ENCODE measurements at regions of chr15 and their contacts with region 1.

Region 1: GRCh38 chr15:101242160-101242998 is 9.5 kb downstream of the CHSY1 start:
- DNase-seq: peak; percentile 78 to 88 (median 80)
- H3K4me3 ChIP-seq: peak overlapping the region in 1 of 2 donors; percentile 57
- H3K4me3 Mint-ChIP-seq: peak overlapping the region; percentile 64 to 89 (median 80)
- H3K27ac ChIP-seq: peak overlapping the region; percentile 49
- H3K27ac Mint-ChIP-seq: peak overlapping the region; percentile 82 to 97 (median 89)
- H3K4me1 ChIP-seq: peaks cover 87% of the 10 kb centered on the region
- H3K4me1 Mint-ChIP-seq: peaks cover 67 to 96% (median 78%) of the 10 kb centered on the region in 4 donors
- H3K27me3 ChIP-seq: no peaks in the 10 kb centered on the region
- H3K27me3 Mint-ChIP-seq: no peaks in the 10 kb centered on the region

Region 2: DNA sequence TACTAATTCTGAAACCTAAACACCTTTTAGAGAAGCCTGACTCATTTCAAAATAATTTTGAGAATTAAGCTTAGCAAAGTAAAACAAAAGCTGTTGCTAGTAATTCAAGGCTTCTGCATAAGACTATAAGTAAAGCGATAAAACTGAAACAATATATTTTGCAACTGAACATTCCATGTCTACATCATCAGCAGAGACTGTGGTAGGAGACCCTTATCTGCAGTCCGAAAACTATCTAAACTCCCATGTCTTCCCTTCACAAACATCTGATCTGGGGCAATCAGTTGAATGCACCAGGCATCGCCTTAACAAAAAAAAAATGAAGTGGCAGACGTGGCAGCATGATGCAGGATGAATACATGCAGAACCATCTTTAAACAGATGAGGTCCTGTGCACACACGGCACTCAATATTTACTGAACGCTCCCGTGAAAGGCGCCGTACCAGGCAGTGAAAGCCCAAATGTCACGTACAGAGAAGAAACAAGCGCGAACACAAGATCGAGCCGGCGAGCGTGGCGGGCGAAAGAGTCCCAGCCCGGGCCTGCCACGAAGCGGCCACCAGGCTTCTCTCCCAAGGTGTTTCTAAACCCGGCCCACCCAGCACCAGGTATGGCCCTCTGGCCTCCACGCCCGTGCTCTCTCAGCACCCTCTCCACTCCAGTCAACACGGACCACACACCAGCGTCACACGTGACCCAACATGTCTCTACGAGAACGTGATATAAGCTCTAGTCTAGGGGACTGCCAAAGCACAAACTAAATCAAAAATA is 53.6 kb before region 1 on chr15:
- CTCF ChIA-PET with region 1: no interaction called
- POLR2A ChIA-PET with region 1: no interaction called
- intact Hi-C with region 1: no loop called
- DNase-seq: no peak
- H3K4me3 ChIP-seq: no peak overlapping the region
- H3K4me3 Mint-ChIP-seq: peak overlapping the region in 5 of 8 donors; percentile 2 to 46 (median 40)
- H3K27ac ChIP-seq: no peak overlapping the region
- H3K27ac Mint-ChIP-seq: peak overlapping the region in 5 of 7 donors; percentile 7 to 63 (median 36)
- H3K4me1 ChIP-seq: peaks cover 34% of the 10 kb centered on the region
- H3K4me1 Mint-ChIP-seq: peaks cover 38 to 61% (median 47%) of the 10 kb centered on the region in 4 donors
- H3K27me3 ChIP-seq: no peaks in the 10 kb centered on the region
- H3K27me3 Mint-ChIP-seq: no peaks in the 10 kb centered on the region

Region 3: GRCh38 chr15:101206176-101206591 is 36.2 kb before region 1 on chr15:
- CTCF ChIA-PET with region 1: interaction called, 6 read pairs
- POLR2A ChIA-PET with region 1: no interaction called
- intact Hi-C with region 1: loop called (anchors 5 kb)
- DNase-seq: peak; percentile 28 to 88 (median 40)
- H3K4me3 ChIP-seq: peak overlapping the region; percentile 19 to 38
- H3K4me3 Mint-ChIP-seq: peak overlapping the region; percentile 79 to 86 (median 84)
- H3K27ac ChIP-seq: no peak overlapping the region
- H3K27ac Mint-ChIP-seq: peak overlapping the region; percentile 73 to 90 (median 80)
- H3K4me1 ChIP-seq: peaks cover 38% of the 10 kb centered on the region
- H3K4me1 Mint-ChIP-seq: peaks cover 40 to 75% (median 64%) of the 10 kb centered on the region in 4 donors
- H3K27me3 ChIP-seq: no peaks in the 10 kb centered on the region
- H3K27me3 Mint-ChIP-seq: no peaks in the 10 kb centered on the region

Region 4: GRCh38 chr15:101269479-101270223 is 27.3 kb after region 1 on chr15:
- CTCF ChIA-PET with region 1: no interaction called
- POLR2A ChIA-PET with region 1: no interaction called
- intact Hi-C with region 1: no loop called
- DNase-seq: no peak
- H3K4me3 ChIP-seq: no peak overlapping the region
- H3K4me3 Mint-ChIP-seq: no peak overlapping the region
- H3K27ac ChIP-seq: no peak overlapping the region
- H3K27ac Mint-ChIP-seq: peak overlapping the region in 3 of 7 donors; percentile 36 to 51 (median 43)
- H3K4me1 ChIP-seq: no peaks in the 10 kb centered on the region
- H3K4me1 Mint-ChIP-seq: peaks cover 0 to 6% (median 0%) of the 10 kb centered on the region in 4 donors
- H3K27me3 ChIP-seq: no peaks in the 10 kb centered on the region
- H3K27me3 Mint-ChIP-seq: no peaks in the 10 kb centered on the region

Measured in CD4-positive, alpha-beta memory T cell (primary cell).